IMR-90 (cell line): ENCODE measurements at regions of chr15 and their contacts with region 1.

Region 1: GRCh38 chr15:92831655-92832328 is 68.3 kb upstream of the CHD2 start:
- DNase-seq: peak; percentile 95
- ATAC-seq: peak; percentile 99
- H3K4me3 ChIP-seq: peak overlapping the region; percentile 22; the same call in 1 of the 2 replicates
- H3K27ac ChIP-seq: peak overlapping the region; percentile 90
- H3K4me1 ChIP-seq: peaks cover 12% of the 10 kb centered on the region
- H3K27me3 ChIP-seq: no peaks in the 10 kb centered on the region
- CTCF ChIP-seq: no peak
- POLR2A ChIP-seq: peak; percentile 42; the same call in 1 of the 2 replicates
- RAD21 ChIP-seq: no peak

Region 2: DNA sequence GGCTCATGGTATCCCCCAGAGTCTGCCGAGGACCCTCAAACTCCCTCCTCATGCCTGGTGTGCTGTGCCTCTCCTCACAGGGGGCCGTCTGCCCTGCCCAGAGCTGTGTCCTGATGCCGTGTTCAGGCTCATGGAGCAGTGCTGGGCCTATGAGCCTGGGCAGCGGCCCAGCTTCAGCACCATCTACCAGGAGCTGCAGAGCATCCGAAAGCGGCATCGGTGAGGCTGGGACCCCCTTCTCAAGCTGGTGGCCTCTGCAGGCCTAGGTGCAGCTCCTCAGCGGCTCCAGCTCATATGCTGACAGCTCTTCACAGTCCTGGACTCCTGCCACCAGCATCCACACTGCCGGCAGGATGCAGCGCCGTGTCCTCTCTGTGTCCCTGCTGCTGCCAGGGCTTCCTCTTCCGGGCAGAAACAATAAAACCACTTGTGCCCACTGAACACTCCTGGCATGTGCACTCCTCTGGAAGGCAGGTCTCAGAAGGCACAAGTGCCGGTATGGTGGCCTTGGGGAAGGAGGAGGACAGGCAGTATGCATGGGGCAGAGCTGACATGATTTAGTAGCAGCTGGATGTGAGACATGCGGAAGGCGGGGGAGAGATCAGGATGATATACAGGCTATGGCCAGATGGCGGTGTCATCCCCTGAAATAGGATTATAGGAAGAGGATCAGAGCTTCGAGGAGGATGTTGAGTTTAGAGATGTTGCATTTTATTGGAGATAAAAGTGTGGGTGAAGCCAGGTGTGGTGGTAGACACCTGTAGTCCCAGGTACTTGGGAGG is 1936.3 kb before region 1 on chr15:
- CTCF ChIA-PET with region 1: no interaction called
- POLR2A ChIA-PET with region 1: no interaction called
- dilution Hi-C with region 1: no loop called
- in situ Hi-C with region 1: no loop called
- intact Hi-C with region 1: no loop called
- DNase-seq: no peak
- ATAC-seq: peak; percentile 49; the same call in 1 of the 2 replicates
- H3K4me3 ChIP-seq: no peak overlapping the region
- H3K27ac ChIP-seq: no peak overlapping the region
- H3K4me1 ChIP-seq: no peaks in the 10 kb centered on the region
- H3K27me3 ChIP-seq: no peaks in the 10 kb centered on the region
- CTCF ChIP-seq: no peak
- POLR2A ChIP-seq: no peak
- RAD21 ChIP-seq: no peak

Region 3: DNA sequence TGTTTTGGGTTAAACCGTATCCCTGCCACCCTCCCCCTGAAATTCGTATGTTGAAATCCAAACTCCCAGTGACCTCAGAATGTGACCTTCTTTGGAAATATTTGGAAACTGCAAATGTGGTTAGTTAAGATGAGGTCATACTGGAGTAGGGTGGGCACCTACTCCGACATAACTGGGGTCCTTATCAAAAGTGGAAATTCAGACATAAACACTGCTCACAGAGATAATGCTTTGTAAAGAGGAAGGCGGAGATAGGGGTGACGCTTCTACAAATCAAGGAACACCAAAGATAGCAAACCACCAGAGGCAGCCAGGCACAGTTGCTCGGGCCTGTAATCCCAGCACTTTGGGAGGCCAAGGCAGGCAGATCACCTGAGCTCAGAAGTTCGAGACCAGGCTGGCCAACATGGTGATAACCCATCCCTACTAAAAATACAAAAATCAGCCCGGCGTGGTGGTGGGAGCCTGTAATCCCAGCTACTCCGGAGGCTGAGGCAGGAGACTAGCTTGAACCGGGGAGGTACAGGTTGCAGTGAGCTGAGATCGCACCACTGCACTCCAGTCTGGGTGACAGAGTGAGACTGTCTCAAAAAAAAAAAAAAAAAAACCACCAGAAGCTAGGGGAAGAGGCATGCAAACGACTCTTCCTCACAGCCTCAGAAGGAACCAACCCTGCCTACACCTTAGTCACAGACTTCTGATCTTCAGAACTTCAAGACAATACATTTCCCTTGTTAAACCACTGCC is 17.2 kb after region 1 on chr15:
- CTCF ChIA-PET with region 1: no interaction called
- POLR2A ChIA-PET with region 1: interaction called, 6 read pairs
- dilution Hi-C with region 1: no loop called
- in situ Hi-C with region 1: no loop called
- intact Hi-C with region 1: loop called (anchors 2 kb)
- DNase-seq: peak; percentile 94
- ATAC-seq: peak; percentile 80
- H3K4me3 ChIP-seq: no peak overlapping the region
- H3K27ac ChIP-seq: peak overlapping the region; percentile 86
- H3K4me1 ChIP-seq: peaks cover 18% of the 10 kb centered on the region
- H3K27me3 ChIP-seq: no peaks in the 10 kb centered on the region
- CTCF ChIP-seq: no peak
- POLR2A ChIP-seq: no peak
- RAD21 ChIP-seq: no peak

Region 4: DNA sequence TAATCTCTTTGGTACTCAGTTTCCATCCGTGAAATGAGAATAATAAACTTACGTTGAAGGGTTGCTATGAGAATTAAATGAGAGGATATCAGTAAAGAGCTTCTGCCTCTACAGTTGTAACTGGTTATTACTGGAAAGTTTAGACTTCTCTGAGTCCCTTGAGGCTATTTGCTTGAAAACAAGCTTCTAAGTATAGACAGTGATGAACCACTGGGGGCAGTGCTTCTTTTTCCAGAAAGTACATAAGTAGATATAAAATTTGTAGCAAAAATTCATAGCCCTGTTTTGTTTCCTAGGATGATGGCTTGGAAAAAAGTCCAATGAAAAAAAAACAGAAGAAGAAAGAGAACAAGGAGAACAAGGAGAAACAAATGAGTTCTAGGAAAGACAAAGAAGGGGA is 170.1 kb after region 1 on chr15:
- CTCF ChIA-PET with region 1: no interaction called
- POLR2A ChIA-PET with region 1: no interaction called
- dilution Hi-C with region 1: no loop called
- in situ Hi-C with region 1: no loop called
- intact Hi-C with region 1: no loop called
- DNase-seq: no peak
- ATAC-seq: no peak
- H3K4me3 ChIP-seq: no peak overlapping the region
- H3K27ac ChIP-seq: no peak overlapping the region
- H3K4me1 ChIP-seq: peaks cover 3% of the 10 kb centered on the region; the same call in 1 of the 2 replicates
- H3K27me3 ChIP-seq: no peaks in the 10 kb centered on the region
- CTCF ChIP-seq: no peak
- POLR2A ChIP-seq: no peak
- RAD21 ChIP-seq: no peak